MCF 10A (cell line): ENCODE measurements at regions of chr2 and their contacts with region 1.

Region 1: GRCh38 chr2:162212366-162212765 is 30.9 kb downstream of the FAP start:
- DNase-seq: no peak
- H3K4me3 Mint-ChIP-seq: no peak overlapping the region
- H3K27ac Mint-ChIP-seq: no peak overlapping the region
- H3K4me1 Mint-ChIP-seq: peaks cover 5% of the 10 kb centered on the region
- H3K27me3 Mint-ChIP-seq: no peaks in the 10 kb centered on the region
- CTCF ChIP-seq: no peak

Region 2: DNA sequence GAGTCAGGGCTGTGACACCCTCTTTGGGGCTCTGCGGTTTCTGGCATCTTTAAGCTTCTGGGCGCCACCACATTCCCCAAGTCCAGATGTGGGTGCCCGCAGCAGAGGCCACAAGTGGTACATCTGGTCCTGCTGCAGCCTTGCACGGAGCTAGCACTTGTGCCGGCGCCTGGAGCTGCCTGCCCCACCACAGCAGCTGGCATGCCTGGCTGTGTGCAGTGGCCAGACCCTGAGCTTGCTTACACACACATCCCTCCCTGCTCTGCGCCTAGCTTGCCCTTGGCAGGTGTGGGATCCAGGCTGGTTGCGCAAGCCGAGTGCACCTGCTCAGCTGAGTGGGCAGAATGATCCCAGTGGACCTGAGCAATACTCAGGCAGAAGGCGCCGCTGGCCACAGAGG is 560.8 kb before region 1 on chr2:
- CTCF ChIA-PET with region 1: no interaction called
- POLR2A ChIA-PET with region 1: no interaction called
- intact Hi-C with region 1: no loop called
- DNase-seq: no peak
- H3K4me3 Mint-ChIP-seq: no peak overlapping the region
- H3K27ac Mint-ChIP-seq: no peak overlapping the region
- H3K4me1 Mint-ChIP-seq: no peaks in the 10 kb centered on the region
- H3K27me3 Mint-ChIP-seq: peaks cover 7% of the 10 kb centered on the region
- CTCF ChIP-seq: no peak

Region 3: DNA sequence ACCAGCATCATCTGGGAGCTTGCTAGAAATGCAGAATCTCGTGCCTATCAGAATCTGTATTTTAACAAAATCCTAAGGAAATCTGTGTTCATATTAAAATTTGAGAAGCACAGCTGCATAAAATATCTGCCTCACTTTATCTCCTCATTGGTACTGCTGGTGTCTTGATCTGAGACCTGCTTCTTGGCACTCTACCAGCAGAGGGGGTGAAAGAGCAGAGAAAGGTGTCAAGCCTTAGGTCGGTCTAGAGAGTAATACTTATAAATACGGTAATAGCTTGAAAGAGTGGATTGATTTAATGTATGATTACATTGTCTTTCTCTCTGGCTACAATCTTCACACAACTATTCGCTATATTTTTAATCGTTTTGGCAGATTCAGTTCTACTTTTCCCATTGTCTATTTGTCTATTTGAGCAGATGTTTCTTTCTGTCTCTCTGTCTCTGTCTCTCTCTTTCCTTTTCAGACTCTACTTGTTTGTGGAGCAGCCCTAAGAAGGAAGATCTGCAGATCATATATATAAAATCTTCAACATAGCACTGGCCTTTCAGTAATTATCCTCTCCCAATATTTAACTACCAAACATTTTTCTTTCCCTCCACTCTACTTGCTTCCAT is 58.6 kb before region 1 on chr2:
- CTCF ChIA-PET with region 1: interaction called, 10 read pairs
- POLR2A ChIA-PET with region 1: no interaction called
- intact Hi-C with region 1: no loop called
- DNase-seq: peak; percentile 87
- H3K4me3 Mint-ChIP-seq: no peak overlapping the region
- H3K27ac Mint-ChIP-seq: no peak overlapping the region
- H3K4me1 Mint-ChIP-seq: peaks cover 7% of the 10 kb centered on the region
- H3K27me3 Mint-ChIP-seq: peaks cover 34% of the 10 kb centered on the region
- CTCF ChIP-seq: peak; percentile 55